ENCODE measurements at regions of chr10 and their contacts with region 1.

Region 1: GRCh38 chr10:49344840-49345239 is 45.9 kb downstream of the C10orf71 start:
- DNase-seq: no peak
- H3K4me3 ChIP-seq: no peak overlapping the region
- CTCF ChIP-seq: no peak

Region 2: GRCh38 chr10:49379596-49380410 is 35.0 kb after region 1 on chr10:
- in situ Hi-C with region 1: loop called (anchors 5 kb)
- DNase-seq: no peak
- H3K4me3 ChIP-seq: no peak overlapping the region
- CTCF ChIP-seq: peak; percentile 14